ENCODE measurements at regions of chr1 and their contacts with region 1.

Region 1: GRCh38 chr1:167533851-167534300 is 15.5 kb upstream of the CD247 start:
- DNase-seq: peak; percentile 76
- ATAC-seq: peak; percentile 95
- H3K4me3 ChIP-seq: no peak overlapping the region
- H3K27ac ChIP-seq: no peak overlapping the region
- H3K4me1 ChIP-seq: no peaks in the 10 kb centered on the region
- H3K27me3 ChIP-seq: no peaks in the 10 kb centered on the region
- CTCF ChIP-seq: peak; percentile 91

Region 2: DNA sequence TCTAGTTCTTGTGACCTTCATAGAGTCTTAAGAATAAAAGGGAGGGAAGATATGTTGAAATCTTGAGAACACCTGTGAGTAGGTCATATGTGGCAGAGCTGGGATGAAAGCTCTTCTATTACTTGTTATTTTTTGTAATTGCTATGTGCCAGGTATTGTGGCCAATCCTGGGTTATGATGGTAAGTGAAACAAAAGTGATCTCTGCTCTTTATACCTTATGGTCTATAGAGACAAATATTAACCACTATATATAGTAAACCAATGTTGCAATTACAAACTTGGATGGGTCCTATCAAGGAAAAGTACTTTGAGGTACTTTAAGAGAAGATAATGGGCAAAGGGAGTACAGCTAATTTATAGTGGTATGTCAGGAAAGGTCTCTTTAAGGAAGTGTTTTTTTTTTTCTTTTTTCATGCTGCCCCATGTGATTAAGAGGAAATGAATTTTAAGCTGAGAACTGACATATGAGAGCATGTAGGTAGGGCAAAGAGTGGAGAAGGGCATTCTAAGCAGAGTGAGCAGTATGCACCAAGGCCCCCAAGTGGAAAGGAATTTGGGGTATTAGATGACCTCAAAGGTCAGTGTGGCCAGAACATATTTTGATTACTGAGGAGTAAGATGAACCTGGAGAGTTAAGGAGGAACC is 269.9 kb before region 1 on chr1:
- intact Hi-C with region 1: loop called (anchors 10 kb)
- DNase-seq: no peak
- ATAC-seq: peak; percentile 68
- H3K4me3 ChIP-seq: no peak overlapping the region
- H3K27ac ChIP-seq: no peak overlapping the region
- H3K4me1 ChIP-seq: peaks cover 32% of the 10 kb centered on the region
- H3K27me3 ChIP-seq: no peaks in the 10 kb centered on the region
- CTCF ChIP-seq: no peak

Region 3: DNA sequence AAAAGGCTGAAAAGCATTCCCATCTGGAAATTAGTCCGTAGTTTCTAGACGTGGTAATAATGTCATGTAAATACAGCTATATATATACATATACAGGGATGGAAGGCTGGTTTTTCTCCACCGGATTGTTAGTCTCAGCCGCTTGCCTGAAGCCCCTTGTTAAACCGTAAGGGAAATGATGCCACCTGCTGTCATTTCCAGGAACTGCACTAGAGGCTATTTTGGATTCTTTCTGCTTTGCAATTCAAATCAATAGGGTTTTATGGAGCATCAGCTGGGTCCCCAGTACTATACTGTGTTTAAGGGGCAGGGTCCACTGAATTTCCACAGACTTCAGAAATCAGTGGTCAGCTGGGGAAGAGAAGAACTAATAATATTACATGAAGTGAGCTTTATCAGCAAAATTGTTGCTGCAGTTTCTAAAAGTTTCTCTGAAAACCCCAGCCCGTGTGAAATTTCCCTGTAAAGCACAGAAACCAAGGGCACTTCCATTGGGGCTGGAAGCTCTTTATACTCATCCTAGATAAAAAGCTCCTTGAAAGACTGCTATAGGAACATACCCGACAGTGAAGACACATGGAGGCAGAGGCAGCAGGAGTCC is 154.1 kb after region 1 on chr1:
- intact Hi-C with region 1: no loop called
- DNase-seq: no peak
- ATAC-seq: peak; percentile 78
- H3K4me3 ChIP-seq: no peak overlapping the region
- H3K27ac ChIP-seq: no peak overlapping the region
- H3K4me1 ChIP-seq: peaks cover 7% of the 10 kb centered on the region
- H3K27me3 ChIP-seq: no peaks in the 10 kb centered on the region
- CTCF ChIP-seq: peak; percentile 94

Region 4: GRCh38 chr1:167922023-167922422 is 388.1 kb after region 1 on chr1:
- intact Hi-C with region 1: no loop called
- DNase-seq: no peak
- ATAC-seq: no peak
- H3K4me3 ChIP-seq: no peak overlapping the region
- H3K27ac ChIP-seq: no peak overlapping the region
- H3K4me1 ChIP-seq: no peaks in the 10 kb centered on the region
- H3K27me3 ChIP-seq: no peaks in the 10 kb centered on the region
- CTCF ChIP-seq: no peak

Measured in upper lobe of right lung (tissue), 1 donor.